ENCODE measurements at regions of chr2 and their contacts with region 1.

Region 1: DNA sequence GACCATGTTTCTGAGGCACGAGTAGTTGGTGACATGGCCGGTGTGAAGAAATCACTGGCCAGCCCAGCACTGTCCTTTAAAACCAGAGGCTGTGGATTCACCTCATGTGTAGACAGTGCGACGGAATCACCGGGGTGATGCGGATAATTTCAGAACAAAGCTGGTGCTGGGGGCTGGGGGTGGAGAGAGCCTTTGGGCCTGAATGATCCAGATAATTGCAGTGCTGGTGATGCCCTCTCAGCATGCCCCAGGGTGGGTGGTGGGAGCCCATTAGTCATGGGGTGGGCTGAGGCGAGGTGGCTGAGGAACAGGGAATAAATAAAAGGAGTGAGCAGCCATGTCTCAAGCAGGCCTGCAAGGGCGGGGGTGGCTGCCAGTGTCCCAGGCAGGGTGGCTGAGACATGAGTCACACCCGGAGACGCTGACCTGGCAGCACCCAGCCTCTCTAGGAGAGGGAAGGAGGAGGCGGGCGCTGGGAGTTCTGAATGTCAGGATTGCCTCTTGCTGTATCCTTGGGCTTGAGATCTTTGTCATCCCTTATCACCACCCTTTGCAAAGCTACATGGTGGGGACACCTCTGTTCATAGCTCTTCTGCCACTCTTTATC is 151.1 kb upstream of the MSH6 start:
- DNase-seq: no peak
- CTCF ChIP-seq: no peak

Region 2: DNA sequence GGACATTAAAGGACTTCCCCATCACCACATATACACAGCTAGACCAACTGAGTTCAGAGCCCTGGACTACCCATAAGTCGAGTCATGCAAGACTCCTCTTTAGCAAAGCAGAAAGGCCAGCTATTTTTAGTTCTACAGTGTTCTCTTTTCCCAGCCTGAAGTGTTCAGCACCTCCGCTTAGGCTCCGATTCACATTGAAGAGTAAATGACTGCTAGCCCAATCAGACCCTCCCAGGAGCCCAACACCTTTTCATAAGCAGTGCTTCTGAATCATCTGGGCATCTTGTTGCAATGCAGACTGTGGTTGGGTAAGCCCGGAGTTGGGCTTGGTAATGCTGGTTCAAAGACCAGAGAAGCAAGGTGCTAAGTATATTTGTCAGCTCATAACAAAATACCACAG is 12.5 kb after region 1 on chr2:
- CTCF ChIA-PET with region 1: interaction called, 20 read pairs
- POLR2A ChIA-PET with region 1: no interaction called
- DNase-seq: no peak
- CTCF ChIP-seq: no peak

Measured in GM10248 (cell line).